Heart left ventricle (tissue), 16 donors: ENCODE measurements at regions of chr1 and their contacts with region 1.

Region 1: DNA sequence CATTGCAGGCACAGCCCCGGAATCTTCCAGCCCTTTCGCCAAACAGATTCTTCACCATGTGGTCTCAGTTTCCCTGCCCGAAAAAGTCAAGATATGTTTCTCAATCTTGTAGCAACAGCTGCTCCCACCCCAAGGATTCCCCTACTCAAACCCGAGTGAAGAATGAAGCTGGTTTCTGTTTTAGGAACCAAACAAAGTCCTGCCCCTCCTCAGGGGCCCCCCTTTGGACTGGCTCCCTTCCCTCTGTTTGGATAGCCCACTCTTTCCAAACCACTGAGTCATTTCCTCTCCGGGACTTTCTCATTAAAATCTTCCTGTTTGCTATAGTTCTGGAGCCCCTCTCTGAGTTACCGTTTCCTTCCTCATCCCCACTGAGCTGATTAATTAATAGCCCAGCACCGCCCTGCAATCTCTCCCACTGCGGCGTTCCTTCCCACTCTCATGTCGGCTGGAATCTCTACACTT is 100.9 kb downstream of the TSEN15 start:
- DNase-seq: peak in 4 of 5 donors; percentile 27 to 58 (median 45)
- ATAC-seq: peak; percentile 37 to 91 (median 66)
- H3K4me3 ChIP-seq: peak overlapping the region in 11 of 12 donors; percentile 24 to 62 (median 50)
- H3K27ac ChIP-seq: peak overlapping the region; percentile 28 to 91 (median 76)
- H3K4me1 ChIP-seq: peaks cover 0 to 50% (median 22%) of the 10 kb centered on the region in 12 donors
- H3K27me3 ChIP-seq: no peaks in the 10 kb centered on the region
- CTCF ChIP-seq: no peak
- POLR2A ChIP-seq: no peak

Region 2: GRCh38 chr1:184199438-184200085 is 47.1 kb after region 1 on chr1:
- intact Hi-C with region 1: loop called in 1 of 10 experiments (anchors 10 kb)
- DNase-seq: no peak
- ATAC-seq: no peak
- H3K4me3 ChIP-seq: no peak overlapping the region
- H3K27ac ChIP-seq: no peak overlapping the region
- H3K4me1 ChIP-seq: peaks cover 0 to 3% (median 0%) of the 10 kb centered on the region in 12 donors
- H3K27me3 ChIP-seq: no peaks in the 10 kb centered on the region
- CTCF ChIP-seq: no peak
- POLR2A ChIP-seq: no peak